ENCODE measurements at regions of chr7 and their contacts with region 1.

Region 1: DNA sequence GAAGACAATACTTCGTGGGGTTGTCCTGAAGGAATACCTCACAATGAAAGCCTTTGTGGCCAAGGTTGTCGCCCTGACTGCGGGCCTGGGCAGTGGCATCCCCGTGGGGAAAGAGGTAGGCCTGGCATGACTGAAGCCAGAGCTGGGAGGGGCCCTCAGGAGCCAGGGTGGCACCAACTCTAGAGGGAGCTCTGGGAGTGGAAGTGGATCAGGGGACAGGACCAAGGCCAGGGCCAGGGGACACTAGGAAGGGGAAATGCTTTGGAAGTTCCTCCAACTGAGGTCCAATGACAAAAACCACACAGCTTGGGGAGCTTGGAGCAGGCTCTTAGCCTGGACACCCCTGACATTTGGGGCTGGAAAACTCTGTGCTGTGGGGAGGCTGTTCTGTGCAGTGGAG is 5.8 kb downstream of the CLCN1 start:
- DNase-seq: no peak
- ATAC-seq: no peak
- H3K4me3 ChIP-seq: no peak overlapping the region
- H3K4me3 Mint-ChIP-seq: no peak overlapping the region
- H3K27ac ChIP-seq: no peak overlapping the region
- H3K27ac Mint-ChIP-seq: no peak overlapping the region
- H3K4me1 ChIP-seq: peaks cover 11 to 22% of the 10 kb centered on the region in 2 donors
- H3K4me1 Mint-ChIP-seq: peaks cover 25% of the 10 kb centered on the region
- H3K27me3 ChIP-seq: peaks cover 0 to 2% (median 0%) of the 10 kb centered on the region in 4 experiments
- H3K27me3 Mint-ChIP-seq: no peaks in the 10 kb centered on the region
- CTCF ChIP-seq: no peak

Region 2: GRCh38 chr7:143013893-143014292 is 307.8 kb before region 1 on chr7:
- CTCF ChIA-PET with region 1: no interaction called
- POLR2A ChIA-PET with region 1: no interaction called
- intact Hi-C with region 1: no loop called
- DNase-seq: no peak
- ATAC-seq: no peak
- H3K4me3 ChIP-seq: no peak overlapping the region
- H3K4me3 Mint-ChIP-seq: peak overlapping the region; percentile 84
- H3K27ac ChIP-seq: peak overlapping the region in 1 of 2 donors; percentile 81
- H3K27ac Mint-ChIP-seq: no peak overlapping the region
- H3K4me1 ChIP-seq: peaks cover 75 to 83% of the 10 kb centered on the region in 2 donors
- H3K4me1 Mint-ChIP-seq: peaks cover 84% of the 10 kb centered on the region
- H3K27me3 ChIP-seq: no peaks in the 10 kb centered on the region
- H3K27me3 Mint-ChIP-seq: no peaks in the 10 kb centered on the region
- CTCF ChIP-seq: no peak

Region 3: GRCh38 chr7:143372070-143372469 is 50.3 kb after region 1 on chr7:
- CTCF ChIA-PET with region 1: no interaction called
- POLR2A ChIA-PET with region 1: no interaction called
- intact Hi-C with region 1: loop called (anchors 10 kb)
- DNase-seq: no peak
- ATAC-seq: no peak
- H3K4me3 ChIP-seq: no peak overlapping the region
- H3K4me3 Mint-ChIP-seq: no peak overlapping the region
- H3K27ac ChIP-seq: no peak overlapping the region
- H3K27ac Mint-ChIP-seq: peak overlapping the region; percentile 54
- H3K4me1 ChIP-seq: peaks cover 22 to 28% of the 10 kb centered on the region in 2 donors
- H3K4me1 Mint-ChIP-seq: peaks cover 31% of the 10 kb centered on the region
- H3K27me3 ChIP-seq: peaks cover 0 to 10% (median under 1%) of the 10 kb centered on the region in 4 experiments
- H3K27me3 Mint-ChIP-seq: peaks cover 16% of the 10 kb centered on the region
- CTCF ChIP-seq: no peak